Right ventricle myocardium superior (tissue), 1 donor: ENCODE measurements at regions of chr17 and their contacts with region 1.

Region 1: GRCh38 chr17:79839363-79840268 is at the start of gene CBX4:
- DNase-seq: peak; percentile 98
- ATAC-seq: peak; percentile 85
- total RNA-seq, gene CBX4: 25.6 TPM

Region 2: GRCh38 chr17:79779084-79779529 is 60.5 kb before region 1 on chr17:
- intact Hi-C with region 1: no loop called
- DNase-seq: peak; percentile 29
- ATAC-seq: no peak

Region 3: DNA sequence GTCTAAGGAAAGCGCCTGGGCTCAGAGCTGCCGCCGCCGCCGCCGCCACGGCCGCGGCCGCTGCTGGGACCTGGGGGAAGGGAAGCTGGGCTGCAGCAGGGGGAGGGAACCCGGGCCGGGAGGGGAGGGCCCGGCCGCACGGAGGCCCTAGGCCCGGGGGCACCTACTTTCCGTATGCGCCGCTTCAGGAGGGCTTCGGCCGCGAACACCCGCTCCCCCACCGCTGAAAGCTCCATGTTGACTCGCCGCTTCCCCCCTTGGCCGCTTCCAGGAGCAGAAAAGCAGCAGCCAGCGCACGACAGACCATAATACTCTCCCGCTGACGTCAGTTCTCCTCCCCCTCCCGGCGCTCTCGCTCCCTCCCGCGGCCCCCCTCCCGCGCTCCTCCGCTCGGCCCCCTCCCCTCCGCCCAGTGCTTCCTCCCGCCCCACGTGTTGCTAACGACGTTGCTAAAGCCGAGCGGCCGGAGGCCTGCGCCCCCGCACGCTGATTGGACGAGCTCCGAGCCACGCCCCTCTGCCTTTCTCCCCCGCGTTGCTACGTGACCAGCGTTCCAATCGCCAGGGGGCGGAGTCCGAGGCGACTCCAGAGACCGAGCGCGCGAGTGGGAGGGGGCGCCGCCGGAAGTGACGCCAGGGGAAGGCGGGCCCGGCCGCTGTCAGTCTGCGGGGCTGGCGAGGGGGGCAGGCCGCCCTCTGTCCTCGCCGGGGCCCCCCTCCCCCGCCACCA is 42.7 kb before region 1 on chr17 and contains the start of gene CBX8:
- intact Hi-C with region 1: loop called (anchors 5 kb)
- DNase-seq: peak; percentile 100
- ATAC-seq: peak; percentile 97
- total RNA-seq, gene CBX8: 6.2 TPM

Region 4: GRCh38 chr17:79915850-79916430 is 76.3 kb after region 1 on chr17:
- intact Hi-C with region 1: loop called (anchors 10 kb)
- DNase-seq: no peak
- ATAC-seq: no peak

Region 5: GRCh38 chr17:79970576-79971068 is 131.0 kb after region 1 on chr17:
- intact Hi-C with region 1: loop called (anchors 10 kb)
- DNase-seq: no peak
- ATAC-seq: no peak